Dorsolateral prefrontal cortex (tissue), 120 donors: ENCODE measurements at regions of chr12 and their contacts with region 1.

Region 1: GRCh38 chr12:124745891-124746570 is 117.6 kb downstream of the SCARB1 start:
- DNase-seq: peak; percentile 92 to 98 (median 96)
- H3K4me3 ChIP-seq: peak overlapping the region in 20 of 59 donors; percentile 3 to 39 (median 24)
- H3K27ac ChIP-seq: peak overlapping the region; percentile 73 to 97 (median 92)
- H3K27me3 ChIP-seq: no peaks in the 10 kb centered on the region
- CTCF ChIP-seq: peak in 24 of 56 donors; percentile 5 to 49 (median 20)

Region 2: DNA sequence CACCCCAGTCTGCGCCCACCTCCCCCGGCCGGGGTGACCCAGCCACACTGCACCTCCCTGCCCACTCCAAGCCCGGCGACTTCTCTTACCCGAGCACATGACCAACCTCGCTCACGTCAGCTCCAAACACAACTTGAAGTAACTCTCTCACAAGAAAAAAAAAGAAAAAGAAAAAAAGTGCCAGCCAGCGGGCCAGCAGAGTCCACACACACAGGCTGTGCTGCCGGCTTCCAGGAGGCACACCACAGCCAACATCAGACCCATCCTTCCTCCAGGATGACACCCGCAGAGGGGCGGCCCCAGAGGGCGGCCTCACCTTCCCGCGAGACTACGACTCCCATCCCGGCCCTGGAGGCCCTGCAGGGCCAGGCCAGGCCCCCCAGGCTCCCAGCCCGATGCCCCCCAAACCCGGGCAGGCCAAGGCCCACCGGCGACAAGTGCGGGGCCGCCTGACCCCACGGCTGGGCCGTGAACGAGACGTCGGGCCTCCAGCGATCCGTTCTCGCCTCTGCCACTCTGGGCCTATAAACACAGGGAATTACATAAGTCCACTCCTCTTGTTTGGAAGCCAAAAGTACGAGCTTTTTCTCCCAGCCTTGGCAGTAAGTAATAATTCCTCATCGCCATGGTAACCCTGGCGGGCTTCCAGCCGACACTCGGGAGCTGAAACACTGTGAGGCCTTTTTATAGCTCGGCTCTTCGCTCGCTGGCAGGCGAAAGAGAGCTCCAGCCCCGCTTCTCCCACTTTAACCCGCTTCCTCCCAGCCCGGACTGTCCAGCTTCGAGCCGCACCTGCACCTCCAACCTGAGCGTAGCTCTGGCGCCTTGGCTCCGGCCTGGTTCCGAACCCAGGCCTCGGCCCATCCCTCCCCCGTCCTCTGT is 227.7 kb before region 1 on chr12:
- intact Hi-C with region 1: loop called in 1 of 2 experiments (anchors 2 kb)
- DNase-seq: peak; percentile 93 to 99 (median 97)
- H3K4me3 ChIP-seq: peak overlapping the region; percentile 44 to 82 (median 66)
- H3K27ac ChIP-seq: peak overlapping the region; percentile 94 to 100 (median 99)
- H3K27me3 ChIP-seq: no peaks in the 10 kb centered on the region
- CTCF ChIP-seq: peak in 6 of 56 donors; percentile 12 to 22 (median 16)

Region 3: DNA sequence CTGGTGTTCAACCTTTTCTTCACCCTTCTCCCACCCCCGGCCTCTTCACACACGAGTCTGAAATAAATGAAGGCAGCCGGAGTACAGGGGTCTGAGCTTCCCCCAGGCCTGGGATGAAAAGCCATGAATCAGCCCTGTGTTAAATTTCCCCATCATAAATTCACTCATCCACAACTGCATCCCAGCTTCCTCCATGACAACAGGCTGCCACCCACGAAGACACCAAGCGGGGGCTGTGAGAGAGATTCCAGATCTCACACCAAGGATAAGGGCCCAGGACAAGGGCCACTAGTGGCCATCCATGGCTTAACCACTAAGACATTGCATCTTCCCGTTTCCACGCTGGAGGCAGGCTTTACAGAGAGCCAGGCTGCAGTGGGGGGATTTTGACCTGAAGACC is 84.7 kb before region 1 on chr12:
- intact Hi-C with region 1: loop called (anchors 5 kb)
- DNase-seq: peak in 2 of 10 donors; percentile 42 to 72
- H3K4me3 ChIP-seq: peak overlapping the region in 7 of 59 donors; percentile 2 to 40 (median 23)
- H3K27ac ChIP-seq: peak overlapping the region in 55 of 59 donors; percentile 3 to 96 (median 86)
- H3K27me3 ChIP-seq: no peaks in the 10 kb centered on the region
- CTCF ChIP-seq: peak in 41 of 56 donors; percentile 7 to 62 (median 39)

Region 4: DNA sequence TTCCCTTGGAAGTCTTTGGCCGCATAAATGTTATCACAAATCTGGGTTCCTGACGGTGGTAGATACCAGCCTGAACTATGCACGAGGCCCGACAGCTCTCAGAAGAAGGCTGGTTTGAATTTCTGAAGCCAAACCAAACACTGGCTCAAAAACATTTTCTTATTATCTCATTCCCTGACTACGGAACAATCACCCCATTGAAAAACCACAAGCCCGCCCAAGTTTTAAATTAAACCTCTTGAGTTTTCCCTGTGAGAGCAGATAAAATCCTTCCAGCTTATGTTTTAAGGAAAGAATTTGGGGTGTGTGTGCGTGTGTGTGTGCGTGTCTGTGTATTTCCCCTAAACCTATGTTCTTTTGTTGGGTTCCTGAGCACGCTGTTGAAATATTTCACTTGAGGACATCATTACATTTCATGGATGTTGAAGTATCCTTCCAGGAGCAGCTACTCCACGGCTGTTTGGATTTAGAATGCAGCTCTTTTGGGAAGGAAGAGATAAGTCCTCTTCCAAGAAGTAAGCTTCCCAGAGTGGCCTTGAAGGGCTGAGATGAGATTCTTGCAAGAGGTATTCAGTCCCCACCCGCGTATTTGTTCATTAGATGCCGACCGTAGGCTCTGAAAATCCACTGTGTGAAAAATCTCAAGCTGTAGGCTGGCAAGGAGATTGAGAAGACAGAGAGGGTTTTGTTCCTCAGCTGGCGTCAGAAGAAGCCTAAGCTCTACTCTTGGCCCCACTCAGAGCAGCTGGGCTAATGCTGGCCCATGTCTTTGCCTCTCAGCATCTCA is 47.6 kb before region 1 on chr12:
- intact Hi-C with region 1: loop called in 1 of 2 experiments (anchors 2 kb)
- DNase-seq: peak in 1 of 10 donors; percentile 57
- H3K4me3 ChIP-seq: peak overlapping the region in 10 of 59 donors; percentile 1 to 28 (median 17)
- H3K27ac ChIP-seq: peak overlapping the region; percentile 48 to 97 (median 91)
- H3K27me3 ChIP-seq: no peaks in the 10 kb centered on the region
- CTCF ChIP-seq: no peak

Region 5: DNA sequence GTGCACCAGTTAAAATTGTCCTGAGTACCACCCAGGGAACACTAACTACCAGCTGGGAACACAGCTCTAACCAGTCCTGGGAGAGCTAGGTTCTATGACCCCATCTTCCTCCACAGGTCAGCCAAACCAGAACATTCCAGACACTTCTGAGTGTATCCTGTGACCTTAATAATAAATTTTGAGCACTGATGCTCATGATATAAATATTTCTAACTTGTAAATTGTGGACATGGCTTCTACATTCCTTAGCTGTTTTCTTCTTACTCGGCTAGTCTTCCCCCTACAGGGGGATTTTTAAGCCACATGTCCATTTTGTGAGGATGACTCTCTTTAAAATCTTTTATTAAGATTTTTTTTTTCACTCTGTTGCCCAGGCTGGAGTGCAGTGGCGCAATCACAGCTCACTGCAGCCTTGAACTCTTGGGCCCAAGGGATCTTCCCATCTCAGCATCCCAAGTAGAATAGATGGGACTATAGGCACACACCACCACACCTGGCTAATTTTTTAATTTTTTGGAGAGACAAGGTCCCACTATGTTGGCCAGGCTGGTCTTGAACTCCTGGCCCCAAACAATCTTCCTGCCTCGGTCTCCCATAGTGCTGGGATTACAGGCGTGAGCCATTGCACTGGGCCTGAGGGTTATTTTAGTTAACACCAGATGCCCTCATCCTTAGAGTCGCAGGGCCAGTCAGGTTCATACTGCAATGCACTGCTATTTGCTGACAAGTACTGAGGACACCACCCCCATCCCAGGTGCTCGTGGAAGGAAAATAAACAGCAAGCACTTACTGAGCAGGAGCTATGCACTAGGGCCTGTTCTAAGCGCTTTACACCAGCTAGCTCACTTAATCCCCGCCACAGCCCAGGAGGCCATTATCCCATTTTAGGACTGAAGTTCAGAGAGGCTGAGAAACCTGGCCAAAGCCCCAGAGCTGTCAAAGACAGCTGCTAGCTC is 36.0 kb before region 1 on chr12:
- intact Hi-C with region 1: no loop called
- DNase-seq: no peak
- H3K4me3 ChIP-seq: no peak overlapping the region
- H3K27ac ChIP-seq: no peak overlapping the region
- H3K27me3 ChIP-seq: no peaks in the 10 kb centered on the region
- CTCF ChIP-seq: no peak

Region 6: GRCh38 chr12:124927201-124928094 is 181.4 kb after region 1 on chr12:
- intact Hi-C with region 1: no loop called
- DNase-seq: peak; percentile 83 to 95 (median 91)
- H3K4me3 ChIP-seq: peak overlapping the region; percentile 40 to 93 (median 76)
- H3K27ac ChIP-seq: peak overlapping the region; percentile 78 to 100 (median 98)
- H3K27me3 ChIP-seq: no peaks in the 10 kb centered on the region
- CTCF ChIP-seq: peak in 5 of 56 donors; percentile 11 to 20 (median 18)